ENCODE measurements at regions of chr1 and their contacts with region 1.

Region 1: DNA sequence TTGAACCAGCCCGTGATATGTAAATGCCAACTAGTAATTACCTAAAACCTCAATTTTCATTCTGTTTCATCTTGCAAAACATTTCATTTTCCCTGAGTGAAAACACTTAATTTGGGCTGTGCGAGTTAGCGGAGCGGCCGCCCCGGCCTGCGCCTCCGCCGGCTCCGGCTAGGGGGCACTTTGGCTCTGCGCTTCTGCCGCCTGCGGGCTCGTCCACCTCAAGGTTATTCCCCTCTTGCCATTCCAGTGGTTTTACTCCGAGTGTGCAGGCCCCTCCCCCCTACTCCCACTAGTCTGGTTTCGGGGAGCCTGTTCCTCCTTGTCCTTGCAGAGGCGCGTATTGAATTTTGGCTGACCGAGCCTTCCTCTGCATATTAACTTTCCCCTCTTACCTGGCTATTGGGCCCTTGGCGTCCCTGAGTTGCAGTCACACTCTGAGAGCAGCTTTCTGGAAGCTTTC is 55.6 kb downstream of the PEX14 start:
- DNase-seq: peak; percentile 62 to 85
- H3K4me3 ChIP-seq: peak overlapping the region in 3 of 4 experiments; percentile 4 to 50 (median 14); a peak in 4 of 8 replicates
- H3K27ac ChIP-seq: no peak overlapping the region
- H3K4me1 ChIP-seq: peaks cover 13 to 34% (median 26%) of the 10 kb centered on the region in 4 experiments
- H3K27me3 ChIP-seq: 0 out of 7 replicates have a peak, but pooled peaks cover 0 to 1% (median 0%) of the 10 kb centered on the region in 4 experiments
- CTCF ChIP-seq: peak; percentile 82 to 86 (median 84)
- EP300 ChIP-seq: 0 out of 3 replicates have a peak, but pooled peaks of 1 of the 2 experiments have one; percentile 57
- POLR2A ChIP-seq: no peak
- RAD21 ChIP-seq: peak; percentile 86 to 89

Region 2: GRCh38 chr1:10514490-10515235 is 15.6 kb before region 1 on chr1:
- CTCF ChIA-PET with region 1: interaction called, 58 read pairs
- POLR2A ChIA-PET with region 1: interaction called, 8 read pairs
- DNase-seq: no peak
- H3K4me3 ChIP-seq: no peak overlapping the region
- H3K27ac ChIP-seq: no peak overlapping the region
- H3K4me1 ChIP-seq: peaks cover 12 to 25% (median 21%) of the 10 kb centered on the region in 4 experiments
- H3K27me3 ChIP-seq: no peaks in the 10 kb centered on the region
- CTCF ChIP-seq: peak; percentile 10 to 73 (median 72)
- EP300 ChIP-seq: no peak
- POLR2A ChIP-seq: no peak
- RAD21 ChIP-seq: peak; percentile 90

Region 3: GRCh38 chr1:10540277-10541005 is 10.1 kb after region 1 on chr1:
- CTCF ChIA-PET with region 1: interaction called, 17 read pairs
- POLR2A ChIA-PET with region 1: interaction called, 3 read pairs
- DNase-seq: no peak
- H3K4me3 ChIP-seq: no peak overlapping the region
- H3K27ac ChIP-seq: no peak overlapping the region
- H3K4me1 ChIP-seq: peaks cover 6 to 13% (median 9%) of the 10 kb centered on the region in 4 experiments
- H3K27me3 ChIP-seq: no peaks in the 10 kb centered on the region
- CTCF ChIP-seq: no peak
- EP300 ChIP-seq: no peak
- POLR2A ChIP-seq: no peak
- RAD21 ChIP-seq: no peak

Region 4: DNA sequence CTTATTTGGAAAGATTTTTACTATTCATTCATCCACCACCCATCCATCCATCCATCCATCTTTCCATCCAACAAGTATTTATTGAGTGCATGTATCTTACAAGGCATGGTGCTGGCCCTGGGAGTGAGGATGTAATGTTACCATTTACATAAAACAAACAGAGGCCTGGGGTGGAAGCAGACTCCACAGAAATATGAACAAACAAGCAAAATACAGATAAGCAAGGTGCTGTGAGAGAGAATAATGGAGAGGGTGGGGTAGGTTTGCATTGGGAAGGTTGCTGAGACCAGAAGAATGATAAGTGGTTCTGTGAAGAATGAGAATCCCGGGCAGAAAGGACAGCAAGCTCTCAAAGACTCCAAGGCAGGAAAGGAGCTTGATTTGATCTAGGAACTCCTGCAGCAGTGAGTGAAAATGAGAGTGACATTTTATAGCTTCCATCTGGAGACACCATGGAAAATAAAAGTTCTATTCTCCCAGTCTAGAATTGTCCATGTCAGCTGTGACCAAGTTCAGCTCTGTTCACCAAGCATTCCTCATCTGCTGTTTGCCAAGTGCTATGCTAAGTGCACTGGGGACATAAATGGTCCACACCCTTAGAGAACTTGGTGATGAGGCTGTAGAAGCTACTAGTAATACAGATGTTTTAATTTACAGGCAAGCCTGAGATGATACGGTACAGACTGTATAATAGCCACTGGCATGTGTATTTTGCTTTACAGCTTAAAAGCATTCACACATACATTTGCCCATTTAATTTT is 19.8 kb after region 1 on chr1:
- CTCF ChIA-PET with region 1: interaction called, 12 read pairs
- POLR2A ChIA-PET with region 1: interaction called, 3 read pairs
- DNase-seq: peak in 1 of 2 experiments; percentile 14
- H3K4me3 ChIP-seq: no peak overlapping the region
- H3K27ac ChIP-seq: no peak overlapping the region
- H3K4me1 ChIP-seq: peaks cover 0 to 6% (median 1%) of the 10 kb centered on the region in 4 experiments; a peak in 2 of 7 replicates
- H3K27me3 ChIP-seq: no peaks in the 10 kb centered on the region
- CTCF ChIP-seq: no peak
- EP300 ChIP-seq: no peak
- POLR2A ChIP-seq: no peak
- RAD21 ChIP-seq: no peak

Region 5: GRCh38 chr1:10651389-10651766 is 121.1 kb after region 1 on chr1:
- CTCF ChIA-PET with region 1: no interaction called
- POLR2A ChIA-PET with region 1: no interaction called
- DNase-seq: peak in 1 of 2 experiments; percentile 73
- H3K4me3 ChIP-seq: peak overlapping the region in 1 of 4 experiments; percentile 63; a peak in 4 of 8 replicates
- H3K27ac ChIP-seq: no peak overlapping the region
- H3K4me1 ChIP-seq: peaks cover 0 to 25% (median 13%) of the 10 kb centered on the region in 4 experiments; a peak in 6 of 7 replicates
- H3K27me3 ChIP-seq: peaks cover 0 to 20% (median 15%) of the 10 kb centered on the region in 4 experiments; a peak in 3 of 7 replicates
- CTCF ChIP-seq: no peak
- EP300 ChIP-seq: no peak
- POLR2A ChIP-seq: no peak
- RAD21 ChIP-seq: 0 out of 4 replicates have a peak, but pooled peaks of 1 of the 2 experiments have one; percentile 1

Measured in H1 (cell line).